Activated CD4-positive, alpha-beta memory T cell treated with anti-CD3 and anti-CD28 coated beads for 36 hours (primary cell): ENCODE measurements at regions of chr3 and their contacts with region 1.

Region 1: DNA sequence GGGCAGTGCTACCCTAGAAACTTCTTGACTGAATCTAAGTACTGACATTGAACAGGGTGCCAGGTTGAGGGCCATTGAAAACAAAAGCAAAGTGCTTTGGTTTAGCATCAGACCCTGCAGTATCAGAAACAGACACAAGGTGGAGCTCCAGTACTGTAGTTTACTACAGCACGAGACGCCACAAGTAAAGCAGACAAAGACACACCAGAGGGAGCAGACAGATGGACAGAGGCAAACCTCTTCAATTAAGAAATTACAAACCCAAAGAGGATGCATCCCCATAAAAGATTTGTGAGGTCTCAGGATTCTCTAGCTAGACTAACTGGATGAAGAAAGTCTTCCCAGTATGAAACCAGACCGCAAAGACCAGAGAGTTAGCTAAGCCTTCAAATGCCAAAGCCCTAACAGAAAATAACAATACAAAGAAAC is 16.6 kb downstream of the TOP2B start:
- DNase-seq: peak; percentile 80
- H3K4me3 Mint-ChIP-seq: no peak overlapping the region
- H3K27ac Mint-ChIP-seq: peak overlapping the region; percentile 2
- H3K4me1 Mint-ChIP-seq: peaks cover 43% of the 10 kb centered on the region
- H3K27me3 Mint-ChIP-seq: no peaks in the 10 kb centered on the region

Region 2: DNA sequence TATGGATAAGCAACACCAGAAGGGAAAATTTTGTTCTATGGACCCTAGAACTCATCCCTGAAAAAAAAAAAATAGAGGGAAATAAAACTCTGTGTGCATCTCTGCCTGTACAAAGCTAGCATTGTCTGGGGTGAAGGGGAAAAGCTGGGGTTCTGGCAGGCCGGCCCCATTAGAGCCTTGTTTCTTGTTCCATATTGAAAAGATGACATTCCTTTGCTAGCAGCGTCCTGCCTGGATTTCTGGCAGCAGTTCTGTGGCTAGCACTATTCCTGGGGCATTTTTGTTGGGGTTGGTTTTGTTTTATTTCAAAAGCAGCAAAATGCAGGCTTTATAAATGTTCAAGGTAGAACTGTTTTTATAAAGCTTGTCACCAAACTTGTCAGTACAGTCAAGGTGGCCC is 174.9 kb before region 1 on chr3:
- CTCF ChIA-PET with region 1: no interaction called
- POLR2A ChIA-PET with region 1: no interaction called
- intact Hi-C with region 1: no loop called
- DNase-seq: no peak
- H3K4me3 Mint-ChIP-seq: no peak overlapping the region
- H3K27ac Mint-ChIP-seq: no peak overlapping the region
- H3K4me1 Mint-ChIP-seq: peaks cover 7% of the 10 kb centered on the region
- H3K27me3 Mint-ChIP-seq: no peaks in the 10 kb centered on the region

Region 3: GRCh38 chr3:25582242-25582641 is 65.9 kb before region 1 on chr3:
- CTCF ChIA-PET with region 1: no interaction called
- POLR2A ChIA-PET with region 1: no interaction called
- intact Hi-C with region 1: no loop called
- DNase-seq: no peak
- H3K4me3 Mint-ChIP-seq: no peak overlapping the region
- H3K27ac Mint-ChIP-seq: no peak overlapping the region
- H3K4me1 Mint-ChIP-seq: no peaks in the 10 kb centered on the region
- H3K27me3 Mint-ChIP-seq: no peaks in the 10 kb centered on the region

Region 4: DNA sequence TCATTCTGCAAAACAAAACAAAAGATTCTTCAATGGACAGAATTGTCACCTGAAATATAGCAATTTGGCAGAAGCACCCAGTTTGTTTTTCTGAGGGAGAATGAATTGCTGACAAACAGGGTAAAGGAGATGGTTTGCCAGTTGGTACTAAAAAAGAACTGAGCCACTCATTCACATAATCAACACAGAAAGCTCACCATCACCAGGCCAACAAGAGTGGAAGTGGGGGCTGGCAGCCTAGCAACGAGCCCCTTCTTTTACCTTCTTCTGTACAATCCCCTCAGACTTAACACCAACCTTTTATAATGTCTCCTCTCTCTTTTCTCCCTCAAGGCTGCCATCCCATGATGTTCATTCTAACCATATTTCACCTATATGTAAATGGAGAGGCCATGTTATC is 10.7 kb after region 1 on chr3:
- CTCF ChIA-PET with region 1: interaction called, 12 read pairs
- POLR2A ChIA-PET with region 1: no interaction called
- intact Hi-C with region 1: loop called (anchors 1 kb)
- DNase-seq: no peak
- H3K4me3 Mint-ChIP-seq: no peak overlapping the region
- H3K27ac Mint-ChIP-seq: no peak overlapping the region
- H3K4me1 Mint-ChIP-seq: peaks cover 68% of the 10 kb centered on the region
- H3K27me3 Mint-ChIP-seq: no peaks in the 10 kb centered on the region

Region 5: GRCh38 chr3:25744470-25744869 is 96.3 kb after region 1 on chr3:
- CTCF ChIA-PET with region 1: interaction called, 16 read pairs
- POLR2A ChIA-PET with region 1: no interaction called
- intact Hi-C with region 1: no loop called
- DNase-seq: no peak
- H3K4me3 Mint-ChIP-seq: no peak overlapping the region
- H3K27ac Mint-ChIP-seq: no peak overlapping the region
- H3K4me1 Mint-ChIP-seq: peaks cover 2% of the 10 kb centered on the region
- H3K27me3 Mint-ChIP-seq: no peaks in the 10 kb centered on the region

Region 6: GRCh38 chr3:25831578-25831977 is 183.5 kb after region 1 on chr3:
- CTCF ChIA-PET with region 1: interaction called, 6 read pairs
- POLR2A ChIA-PET with region 1: no interaction called
- intact Hi-C with region 1: loop called (anchors 2 kb)
- DNase-seq: no peak
- H3K4me3 Mint-ChIP-seq: no peak overlapping the region
- H3K27ac Mint-ChIP-seq: no peak overlapping the region
- H3K4me1 Mint-ChIP-seq: peaks cover under 1% of the 10 kb centered on the region
- H3K27me3 Mint-ChIP-seq: peaks cover 7% of the 10 kb centered on the region

Region 7: GRCh38 chr3:25863416-25863959 is 215.4 kb after region 1 on chr3:
- CTCF ChIA-PET with region 1: interaction called, 169 read pairs
- POLR2A ChIA-PET with region 1: no interaction called
- intact Hi-C with region 1: no loop called
- DNase-seq: no peak
- H3K4me3 Mint-ChIP-seq: no peak overlapping the region
- H3K27ac Mint-ChIP-seq: no peak overlapping the region
- H3K4me1 Mint-ChIP-seq: no peaks in the 10 kb centered on the region
- H3K27me3 Mint-ChIP-seq: no peaks in the 10 kb centered on the region